ENCODE measurements at regions of chr2 and their contacts with region 1.

Region 1: GRCh38 chr2:190376591-190377245 is 31.4 kb upstream of the MFSD6 start:
- DNase-seq: no peak
- ATAC-seq: no peak
- H3K4me3 Mint-ChIP-seq: no peak overlapping the region
- H3K27ac Mint-ChIP-seq: no peak overlapping the region
- H3K4me1 Mint-ChIP-seq: peaks cover 3% of the 10 kb centered on the region
- H3K27me3 Mint-ChIP-seq: no peaks in the 10 kb centered on the region
- CTCF ChIP-seq: no peak

Region 2: DNA sequence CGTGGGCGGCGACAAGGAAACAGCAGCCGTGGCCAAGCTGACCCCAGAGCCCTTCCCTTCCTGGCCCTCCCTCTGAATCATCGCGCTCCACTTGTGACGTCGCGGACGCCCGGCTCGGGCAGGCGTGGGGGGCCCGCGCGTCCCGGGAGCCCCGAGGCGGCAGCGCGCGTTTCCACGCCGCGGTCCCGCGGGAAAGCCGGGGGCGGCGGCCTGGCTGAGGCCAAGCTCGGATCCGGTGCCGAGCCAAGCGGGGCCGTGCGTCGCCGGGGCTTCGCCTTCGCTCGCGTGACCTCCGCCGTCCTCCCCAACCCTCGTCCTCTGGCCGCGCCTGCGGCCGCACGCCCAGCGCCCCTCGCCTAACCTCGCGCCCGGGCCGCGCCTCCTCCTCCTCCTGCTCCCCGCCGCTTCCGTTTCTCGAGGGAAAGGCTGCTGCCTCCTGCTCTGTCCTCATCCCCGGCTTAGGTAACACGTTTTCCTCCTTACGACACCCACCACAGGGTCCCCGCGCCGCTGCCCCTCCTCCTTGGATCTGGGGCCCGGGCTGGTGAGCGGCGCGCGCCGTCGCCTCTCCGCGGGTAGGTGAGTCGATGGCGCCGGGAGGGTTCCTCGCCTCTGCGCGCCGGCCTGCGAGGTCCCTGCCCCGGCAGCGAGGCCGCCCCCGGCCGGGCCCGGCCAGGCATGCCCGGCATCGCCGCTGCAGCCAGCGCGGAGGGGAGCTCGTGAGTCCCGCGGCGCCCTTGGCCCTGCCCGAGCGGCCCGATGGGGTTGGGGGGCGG is 33.0 kb before region 1 on chr2 and contains the start of gene INPP1:
- CTCF ChIA-PET with region 1: no interaction called
- POLR2A ChIA-PET with region 1: no interaction called
- intact Hi-C with region 1: loop called (anchors 1 kb)
- DNase-seq: peak; percentile 45
- ATAC-seq: peak; percentile 66
- H3K4me3 Mint-ChIP-seq: peak within 1 kb of the TSS; percentile 87
- H3K27ac Mint-ChIP-seq: peak within 1 kb of the TSS; percentile 47
- H3K4me1 Mint-ChIP-seq: peaks cover 9% of the 10 kb centered on the region
- H3K27me3 Mint-ChIP-seq: no peaks in the 10 kb centered on the region
- CTCF ChIP-seq: no peak
- total RNA-seq, gene INPP1: 4.2 and 4.8 TPM in 2 replicates

Region 3: GRCh38 chr2:190360561-190360960 is 16.2 kb before region 1 on chr2:
- CTCF ChIA-PET with region 1: interaction called, 3 read pairs
- POLR2A ChIA-PET with region 1: no interaction called
- intact Hi-C with region 1: loop called (anchors 1 kb)
- DNase-seq: no peak
- ATAC-seq: no peak
- H3K4me3 Mint-ChIP-seq: peak overlapping the region; percentile 89
- H3K27ac Mint-ChIP-seq: peak overlapping the region; percentile 89
- H3K4me1 Mint-ChIP-seq: peaks cover 24% of the 10 kb centered on the region
- H3K27me3 Mint-ChIP-seq: no peaks in the 10 kb centered on the region
- CTCF ChIP-seq: no peak

Measured in activated B cell treated with CpG ODN at 0.5 μM for 24 hours (primary cell).